ENCODE measurements at regions of chr3 and their contacts with region 1.

Region 1: DNA sequence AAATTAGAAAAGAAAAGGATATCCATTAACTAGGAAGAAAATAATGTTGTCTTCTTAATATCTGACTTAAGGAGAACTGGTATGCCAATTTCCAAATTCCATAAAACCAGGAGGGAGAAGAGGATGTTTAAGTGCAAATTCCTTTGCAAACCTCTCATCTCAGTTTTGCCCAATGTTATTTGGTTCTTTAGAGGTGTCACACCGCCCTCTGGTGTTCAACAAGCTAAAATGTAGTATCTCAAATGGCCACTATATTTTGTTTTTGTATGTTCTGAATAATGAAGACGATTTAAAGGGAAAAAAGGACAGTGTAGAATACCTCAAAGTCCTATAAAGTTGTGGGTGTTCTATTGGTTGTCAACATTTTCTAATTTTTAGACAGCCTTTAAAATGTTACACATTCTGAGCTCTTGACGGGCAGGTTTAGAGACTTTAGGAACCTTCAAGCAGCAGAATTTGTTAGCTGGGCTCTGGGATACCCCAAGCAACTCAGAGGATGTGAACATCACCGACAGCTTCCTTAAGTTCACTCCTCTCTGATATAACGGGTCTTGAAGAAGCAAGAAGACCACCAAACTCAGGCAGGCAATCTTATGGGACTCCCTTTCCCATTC is 458.3 kb downstream of the MFSD1 start:
- DNase-seq: peak; percentile 88
- H3K4me3 ChIP-seq: no peak overlapping the region
- H3K27ac ChIP-seq: no peak overlapping the region
- H3K4me1 ChIP-seq: peaks cover 3% of the 10 kb centered on the region; the same call in 1 of the 2 replicates
- H3K27me3 ChIP-seq: peaks cover 6% of the 10 kb centered on the region; the same call in 1 of the 2 replicates

Region 2: GRCh38 chr3:158845765-158846350 is 414.3 kb before region 1 on chr3:
- in situ Hi-C with region 1: loop called (anchors 5 kb)
- DNase-seq: peak; percentile 41
- H3K4me3 ChIP-seq: no peak overlapping the region
- H3K27ac ChIP-seq: no peak overlapping the region
- H3K4me1 ChIP-seq: no peaks in the 10 kb centered on the region
- H3K27me3 ChIP-seq: no peaks in the 10 kb centered on the region

Region 3: GRCh38 chr3:159586571-159587202 is 326.5 kb after region 1 on chr3:
- in situ Hi-C with region 1: loop called (anchors 10 kb)
- DNase-seq: peak; percentile 50
- H3K4me3 ChIP-seq: no peak overlapping the region
- H3K27ac ChIP-seq: no peak overlapping the region
- H3K4me1 ChIP-seq: peaks cover 12% of the 10 kb centered on the region
- H3K27me3 ChIP-seq: no peaks in the 10 kb centered on the region; the same call in 1 of the 2 replicates

Region 4: GRCh38 chr3:159804726-159805410 is 544.7 kb after region 1 on chr3:
- in situ Hi-C with region 1: loop called (anchors 10 kb)
- DNase-seq: peak; percentile 94
- H3K4me3 ChIP-seq: peak overlapping the region; percentile 25
- H3K27ac ChIP-seq: peak overlapping the region; percentile 50
- H3K4me1 ChIP-seq: peaks cover 31% of the 10 kb centered on the region
- H3K27me3 ChIP-seq: no peaks in the 10 kb centered on the region

Region 5: GRCh38 chr3:160003520-160004128 is 743.5 kb after region 1 on chr3:
- in situ Hi-C with region 1: loop called (anchors 10 kb)
- DNase-seq: peak; percentile 64
- H3K4me3 ChIP-seq: no peak overlapping the region
- H3K27ac ChIP-seq: no peak overlapping the region
- H3K4me1 ChIP-seq: no peaks in the 10 kb centered on the region
- H3K27me3 ChIP-seq: no peaks in the 10 kb centered on the region

Measured in GM23248 (cell line).